Activated naive CD4-positive, alpha-beta T cell treated with anti-CD3 and anti-CD28 coated beads for 36 hours (primary cell): ENCODE measurements at regions of chr3 and their contacts with region 1.

Region 1: DNA sequence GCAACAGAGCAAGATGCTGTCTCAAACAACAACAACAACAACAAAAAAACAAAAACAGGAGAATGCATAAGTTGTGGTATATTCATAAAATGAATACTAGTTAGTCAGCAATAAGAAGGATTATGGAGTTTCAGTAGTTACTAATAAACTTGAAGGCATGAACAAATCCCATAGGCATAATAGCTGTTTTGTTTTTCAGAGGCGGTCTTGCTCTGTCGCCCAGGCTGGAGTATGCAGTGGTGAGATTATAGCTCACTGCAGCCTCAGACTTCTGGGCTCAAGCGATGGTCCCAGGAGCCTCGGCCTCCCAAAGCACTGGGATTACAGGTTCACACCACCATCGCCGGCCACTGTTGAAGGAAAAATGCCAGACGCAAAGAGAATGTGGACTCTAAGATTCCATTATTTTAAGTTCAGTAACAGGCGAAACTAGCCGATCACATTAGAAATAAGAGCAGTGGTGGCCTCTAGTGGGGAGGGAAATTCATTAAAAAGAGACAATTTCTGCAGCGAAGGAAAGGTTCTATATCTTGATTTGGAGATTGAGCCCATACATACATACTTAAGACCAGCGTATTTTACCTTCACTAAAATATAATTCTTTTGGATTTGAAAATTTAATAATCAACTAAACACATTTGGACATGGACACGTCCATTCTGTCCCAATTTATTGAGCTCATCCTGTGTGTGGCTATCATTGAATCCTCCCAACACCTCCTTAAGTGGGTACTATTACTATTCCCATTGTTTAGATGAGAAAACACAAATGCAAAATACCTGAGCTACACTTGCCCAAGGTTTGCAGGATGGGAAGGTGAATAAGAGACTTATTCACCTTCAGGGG is 27.4 kb upstream of the HDAC11 start:
- DNase-seq: peak; percentile 67
- H3K4me3 Mint-ChIP-seq: peak overlapping the region; percentile 91
- H3K27ac Mint-ChIP-seq: peak overlapping the region; percentile 93
- H3K4me1 Mint-ChIP-seq: peaks cover 24% of the 10 kb centered on the region
- H3K27me3 Mint-ChIP-seq: no peaks in the 10 kb centered on the region

Region 2: GRCh38 chr3:12868039-12869034 is 584.4 kb before region 1 on chr3:
- CTCF ChIA-PET with region 1: no interaction called
- intact Hi-C with region 1: loop called (anchors 5 kb)
- DNase-seq: peak; percentile 71
- H3K4me3 Mint-ChIP-seq: peak overlapping the region; percentile 67
- H3K27ac Mint-ChIP-seq: no peak overlapping the region
- H3K4me1 Mint-ChIP-seq: peaks cover 7% of the 10 kb centered on the region
- H3K27me3 Mint-ChIP-seq: peaks cover 16% of the 10 kb centered on the region

Region 3: GRCh38 chr3:13308380-13308801 is 144.3 kb before region 1 on chr3:
- CTCF ChIA-PET with region 1: interaction called, 3 read pairs
- intact Hi-C with region 1: loop called (anchors 1 kb)
- DNase-seq: peak; percentile 46
- H3K4me3 Mint-ChIP-seq: no peak overlapping the region
- H3K27ac Mint-ChIP-seq: no peak overlapping the region
- H3K4me1 Mint-ChIP-seq: peaks cover 6% of the 10 kb centered on the region
- H3K27me3 Mint-ChIP-seq: no peaks in the 10 kb centered on the region

Region 4: GRCh38 chr3:13391308-13391707 is 61.4 kb before region 1 on chr3:
- CTCF ChIA-PET with region 1: interaction called, 15 read pairs
- intact Hi-C with region 1: loop called (anchors 1 kb)
- DNase-seq: peak; percentile 30
- H3K4me3 Mint-ChIP-seq: no peak overlapping the region
- H3K27ac Mint-ChIP-seq: no peak overlapping the region
- H3K4me1 Mint-ChIP-seq: peaks cover 24% of the 10 kb centered on the region
- H3K27me3 Mint-ChIP-seq: no peaks in the 10 kb centered on the region

Region 5: GRCh38 chr3:13419505-13420044 is 33.1 kb before region 1 on chr3:
- CTCF ChIA-PET with region 1: interaction called, 72 read pairs
- intact Hi-C with region 1: loop called (anchors 1 kb)
- DNase-seq: peak; percentile 52
- H3K4me3 Mint-ChIP-seq: peak overlapping the region; percentile 92
- H3K27ac Mint-ChIP-seq: peak overlapping the region; percentile 93
- H3K4me1 Mint-ChIP-seq: peaks cover 70% of the 10 kb centered on the region
- H3K27me3 Mint-ChIP-seq: no peaks in the 10 kb centered on the region

Region 6: DNA sequence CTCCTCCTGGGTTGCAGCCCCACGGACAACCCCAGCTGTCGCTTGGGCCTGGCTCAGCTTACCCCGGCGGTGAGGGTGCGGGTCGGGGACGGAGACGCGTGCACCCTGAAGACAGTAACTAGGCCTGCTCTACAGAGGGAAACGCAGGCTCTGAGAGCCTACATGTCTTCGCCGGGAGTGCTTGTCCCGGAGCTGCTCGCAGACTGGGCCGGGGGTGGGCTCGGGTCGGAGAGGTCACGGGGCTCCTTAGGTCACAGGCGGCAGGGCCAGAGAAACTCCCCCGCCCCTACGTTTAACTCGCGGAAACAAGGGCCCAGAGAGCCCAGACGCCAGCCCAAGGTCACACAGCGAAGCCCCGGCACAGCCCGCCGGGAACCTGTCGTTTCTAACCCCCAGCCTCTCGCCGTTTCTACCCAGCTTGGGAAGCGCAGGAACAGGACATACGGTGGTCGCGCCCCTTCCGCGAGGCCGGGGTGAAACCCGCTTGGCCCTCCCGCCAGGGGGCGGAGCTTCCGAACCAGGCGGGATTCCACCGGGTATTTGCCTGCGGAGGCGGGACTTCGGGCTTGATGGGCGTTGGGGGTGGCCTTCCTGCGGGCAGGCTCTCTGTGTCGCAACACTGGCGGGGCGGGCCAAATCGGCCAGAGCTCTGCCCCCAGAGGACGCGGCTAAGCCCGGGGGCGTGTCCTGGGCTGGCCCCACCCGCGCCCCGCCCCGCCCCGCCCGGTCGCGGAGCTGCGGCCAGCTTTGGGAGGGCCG is 27.0 kb after region 1 on chr3 and contains the start of gene HDAC11:
- CTCF ChIA-PET with region 1: interaction called, 6 read pairs
- intact Hi-C with region 1: loop called (anchors 1 kb)
- DNase-seq: peak; percentile 99
- H3K4me3 Mint-ChIP-seq: peak within 1 kb of the TSS; percentile 92
- H3K27ac Mint-ChIP-seq: peak within 1 kb of the TSS; percentile 82
- H3K4me1 Mint-ChIP-seq: peaks cover 12% of the 10 kb centered on the region
- H3K27me3 Mint-ChIP-seq: no peaks in the 10 kb centered on the region
- total RNA-seq, gene HDAC11: 1.6 to 2.4 TPM